H1 (cell line): ENCODE measurements at regions of chr17 and their contacts with region 1.

Region 1: GRCh38 chr17:78970834-78971773 is 8.6 kb downstream of the LGALS3BP start:
- DNase-seq: peak; percentile 41 to 92
- H3K4me3 ChIP-seq: no peak overlapping the region
- H3K27ac ChIP-seq: no peak overlapping the region
- H3K4me1 ChIP-seq: peaks cover 0 to 5% (median 4%) of the 10 kb centered on the region in 4 experiments; a peak in 4 of 7 replicates
- H3K27me3 ChIP-seq: no peaks in the 10 kb centered on the region
- CTCF ChIP-seq: peak; percentile 87 to 99 (median 91)
- EP300 ChIP-seq: no peak
- POLR2A ChIP-seq: no peak
- RAD21 ChIP-seq: peak; percentile 85 to 92

Region 2: DNA sequence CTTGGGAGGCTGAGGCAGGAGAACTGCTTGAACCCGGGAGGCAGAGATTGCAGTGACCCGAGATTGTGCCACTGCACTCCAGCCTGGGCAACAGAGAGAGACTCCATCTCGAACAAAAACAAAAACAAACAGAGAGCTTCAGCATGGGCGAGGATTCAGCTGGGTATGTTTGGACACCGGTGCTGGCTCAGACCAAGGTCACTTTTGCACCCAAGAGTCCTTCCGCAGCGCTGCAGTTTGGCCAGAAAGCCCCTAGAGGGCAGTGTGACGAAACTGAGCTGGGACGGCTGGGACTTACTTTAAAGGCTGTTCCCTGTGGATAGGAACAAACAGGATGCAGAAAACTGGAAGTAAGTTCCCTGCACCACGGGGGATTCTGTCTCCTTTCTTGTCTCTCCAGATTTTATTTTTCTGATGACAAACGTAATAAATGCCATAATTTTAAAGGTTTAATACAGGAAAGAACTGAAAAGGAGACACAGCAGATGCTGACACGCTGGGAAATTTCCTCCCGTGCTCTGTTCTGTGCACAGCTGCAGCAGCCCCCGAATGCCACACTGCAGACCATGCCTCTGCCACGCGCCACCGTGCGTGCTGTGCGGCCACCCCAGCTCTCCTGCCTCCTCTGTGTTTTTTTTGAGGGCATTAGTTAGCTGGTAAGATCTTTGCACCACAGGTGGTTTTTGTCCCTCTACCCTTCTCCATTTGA is 105.3 kb before region 1 on chr17:
- CTCF ChIA-PET with region 1: interaction called, 46 read pairs
- POLR2A ChIA-PET with region 1: interaction called, 5 read pairs
- DNase-seq: peak; percentile 60 to 95
- H3K4me3 ChIP-seq: no peak overlapping the region
- H3K27ac ChIP-seq: no peak overlapping the region
- H3K4me1 ChIP-seq: no peaks in the 10 kb centered on the region; a peak in 1 of 7 replicates
- H3K27me3 ChIP-seq: no peaks in the 10 kb centered on the region
- CTCF ChIP-seq: peak; percentile 82 to 97 (median 94)
- EP300 ChIP-seq: no peak
- POLR2A ChIP-seq: no peak
- RAD21 ChIP-seq: peak; percentile 79 to 82

Region 3: GRCh38 chr17:78890498-78890897 is 80.6 kb before region 1 on chr17:
- CTCF ChIA-PET with region 1: interaction called, 19 read pairs
- POLR2A ChIA-PET with region 1: interaction called, 3 read pairs
- DNase-seq: no peak
- H3K4me3 ChIP-seq: no peak overlapping the region
- H3K27ac ChIP-seq: no peak overlapping the region
- H3K4me1 ChIP-seq: no peaks in the 10 kb centered on the region; a peak in 2 of 7 replicates
- H3K27me3 ChIP-seq: no peaks in the 10 kb centered on the region; a peak in 1 of 7 replicates
- CTCF ChIP-seq: no peak
- EP300 ChIP-seq: no peak
- POLR2A ChIP-seq: no peak
- RAD21 ChIP-seq: no peak

Region 4: DNA sequence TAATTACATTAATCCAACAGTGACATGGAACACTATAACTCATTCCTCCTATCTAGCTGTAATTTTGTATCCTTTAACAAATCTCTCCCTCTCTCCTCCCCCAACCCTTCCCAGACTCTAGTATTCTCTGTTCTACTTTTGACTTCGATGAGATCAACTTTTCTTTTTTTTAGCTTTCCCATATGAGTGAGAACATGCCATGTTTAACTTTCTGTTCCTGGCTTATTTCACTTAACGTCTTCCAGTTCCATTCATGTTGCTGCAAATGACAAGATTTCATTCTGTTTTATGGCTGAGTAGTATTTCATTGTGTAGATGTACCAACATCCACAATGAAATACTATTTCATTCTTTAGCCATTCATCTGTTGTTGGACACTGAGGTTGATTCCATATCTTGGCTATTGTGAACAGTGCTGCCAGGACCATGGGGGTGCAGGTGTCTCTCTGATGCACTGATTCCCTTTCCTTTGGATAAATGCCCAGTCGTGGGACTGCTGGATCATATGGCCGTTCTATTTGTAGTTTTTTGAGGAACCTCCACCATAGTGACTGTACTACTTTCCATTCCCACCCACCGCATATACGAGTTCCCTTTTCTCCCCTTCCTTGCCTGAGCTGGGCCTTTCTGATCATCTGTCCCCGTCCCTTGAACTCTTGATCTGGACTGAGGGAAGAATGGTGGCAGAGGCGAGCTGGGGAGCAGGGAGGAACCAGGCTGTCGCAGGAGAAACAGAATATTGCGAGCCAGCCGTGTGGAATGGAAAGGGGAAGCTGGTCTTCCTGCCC is 60.4 kb before region 1 on chr17:
- CTCF ChIA-PET with region 1: interaction called, 10 read pairs
- POLR2A ChIA-PET with region 1: no interaction called
- DNase-seq: no peak
- H3K4me3 ChIP-seq: no peak overlapping the region
- H3K27ac ChIP-seq: no peak overlapping the region
- H3K4me1 ChIP-seq: peaks cover 0 to 4% (median 3%) of the 10 kb centered on the region in 4 experiments; a peak in 4 of 7 replicates
- H3K27me3 ChIP-seq: no peaks in the 10 kb centered on the region; a peak in 1 of 7 replicates
- CTCF ChIP-seq: no peak
- EP300 ChIP-seq: no peak
- POLR2A ChIP-seq: no peak
- RAD21 ChIP-seq: no peak

Region 5: GRCh38 chr17:78947235-78948127 is 23.6 kb before region 1 on chr17:
- CTCF ChIA-PET with region 1: interaction called, 18 read pairs
- POLR2A ChIA-PET with region 1: interaction called, 10 read pairs
- DNase-seq: no peak
- H3K4me3 ChIP-seq: no peak overlapping the region
- H3K27ac ChIP-seq: no peak overlapping the region
- H3K4me1 ChIP-seq: peaks cover 0 to 1% (median 0%) of the 10 kb centered on the region in 4 experiments; a peak in 2 of 7 replicates
- H3K27me3 ChIP-seq: no peaks in the 10 kb centered on the region
- CTCF ChIP-seq: no peak
- EP300 ChIP-seq: no peak
- POLR2A ChIP-seq: no peak
- RAD21 ChIP-seq: no peak